ENCODE measurements at regions of chr11 and their contacts with region 1.

Region 1: DNA sequence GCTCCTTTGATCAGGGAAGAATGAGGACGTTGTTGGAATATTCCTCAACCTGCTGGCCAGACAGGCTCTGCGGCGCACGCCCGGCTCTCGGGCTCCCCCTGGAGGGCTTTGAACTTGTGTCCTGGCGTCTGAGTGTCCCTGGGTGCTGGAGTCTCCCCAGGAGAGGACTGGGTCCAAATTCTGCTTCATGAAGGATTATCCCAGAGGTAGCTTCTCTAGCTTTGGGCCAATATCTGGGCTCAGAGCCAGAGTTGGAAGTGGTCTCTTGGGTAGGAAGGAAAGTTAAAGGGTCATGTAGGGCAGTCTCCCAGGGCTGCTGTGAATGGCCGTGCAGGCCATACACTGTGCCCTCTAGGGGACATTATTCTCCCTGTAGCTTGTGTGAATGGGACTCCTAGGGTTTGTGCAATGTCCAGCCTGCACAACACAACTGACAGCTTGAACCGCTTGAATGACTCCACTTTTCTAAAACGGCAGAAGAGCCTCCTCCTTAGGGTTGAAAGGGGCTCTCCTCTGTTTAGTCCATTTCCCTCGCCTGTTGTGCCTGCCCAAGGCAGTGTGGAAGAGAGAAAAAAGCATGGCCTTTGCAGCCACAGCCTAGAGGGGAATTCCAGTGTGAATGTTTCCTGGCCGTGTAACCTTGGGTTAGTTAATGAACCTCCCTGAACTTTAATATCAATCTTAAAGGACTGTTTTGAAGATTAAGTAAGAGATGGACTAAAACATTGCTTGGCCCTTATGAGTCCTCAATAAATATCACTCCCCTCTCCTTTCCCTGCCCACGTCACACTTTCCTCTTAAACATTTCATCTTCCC is 111.2 kb upstream of the THY1 start:
- DNase-seq: no peak
- H3K4me3 ChIP-seq: no peak overlapping the region
- H3K27me3 ChIP-seq: peaks cover 9% of the 10 kb centered on the region
- CTCF ChIP-seq: peak; percentile 93

Region 2: DNA sequence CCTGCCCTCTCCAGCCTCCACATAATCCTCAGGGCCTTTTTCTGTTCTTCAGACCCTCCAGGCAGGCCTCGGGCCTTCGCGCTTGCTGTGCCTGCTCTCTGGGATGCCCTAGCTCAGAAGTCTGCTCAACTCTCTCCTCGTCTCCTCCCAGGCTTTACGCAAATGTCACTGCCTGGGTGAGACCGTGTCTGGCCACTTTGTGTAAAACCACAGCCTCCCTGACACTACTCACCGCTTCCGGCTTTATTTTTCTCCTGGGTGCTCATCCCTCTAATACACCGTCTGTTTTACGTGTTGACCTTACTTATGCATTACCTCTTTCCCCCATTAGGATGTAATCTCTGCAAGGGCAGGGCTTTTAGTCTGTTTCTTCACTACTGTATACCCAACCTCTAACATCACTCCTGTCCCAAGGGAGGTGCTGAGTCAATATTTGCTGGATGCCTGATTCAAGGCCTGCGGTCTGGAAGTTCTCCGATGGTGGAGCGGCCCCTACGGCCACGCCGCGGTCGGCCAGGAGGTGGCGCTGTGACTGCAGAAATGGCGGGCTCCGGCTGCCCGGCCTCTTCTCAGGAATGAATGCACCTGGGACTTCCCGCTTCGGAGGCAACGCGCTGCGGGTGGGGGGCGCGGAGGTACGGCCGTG is 53.0 kb before region 1 on chr11:
- CTCF ChIA-PET with region 1: interaction called, 45 read pairs
- POLR2A ChIA-PET with region 1: no interaction called
- DNase-seq: peak; percentile 44
- H3K4me3 ChIP-seq: no peak overlapping the region
- H3K27me3 ChIP-seq: peaks cover 7% of the 10 kb centered on the region
- CTCF ChIP-seq: peak; percentile 98

Region 3: DNA sequence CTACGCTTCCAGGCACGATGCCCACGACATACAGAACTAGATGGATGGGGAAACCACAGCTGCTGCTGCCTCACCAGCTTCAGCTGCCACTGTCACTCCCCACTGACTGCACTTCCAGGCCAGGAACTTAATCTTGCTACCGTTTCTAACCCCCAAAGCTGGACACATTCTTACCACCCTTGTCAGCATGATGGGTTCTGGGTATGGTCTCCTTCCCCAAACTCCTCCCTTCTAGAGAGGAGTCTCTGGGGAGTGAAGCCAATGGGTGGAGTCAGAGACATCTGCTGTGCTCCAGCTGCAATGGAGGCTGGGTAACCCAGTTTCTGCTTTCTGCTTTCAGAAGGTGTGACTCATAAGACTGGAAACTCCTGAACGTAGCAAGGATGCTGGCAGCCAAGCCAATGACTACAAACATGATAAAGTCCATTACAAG is 24.1 kb before region 1 on chr11:
- CTCF ChIA-PET with region 1: interaction called, 15 read pairs
- POLR2A ChIA-PET with region 1: no interaction called
- DNase-seq: peak; percentile 46
- H3K4me3 ChIP-seq: no peak overlapping the region
- H3K27me3 ChIP-seq: peaks cover 18% of the 10 kb centered on the region
- CTCF ChIP-seq: no peak

Region 4: GRCh38 chr11:119518746-119519730 is 15.1 kb before region 1 on chr11:
- CTCF ChIA-PET with region 1: interaction called, 65 read pairs
- POLR2A ChIA-PET with region 1: no interaction called
- DNase-seq: no peak
- H3K4me3 ChIP-seq: no peak overlapping the region
- H3K27me3 ChIP-seq: peaks cover 9% of the 10 kb centered on the region
- CTCF ChIP-seq: no peak

Region 5: GRCh38 chr11:119545978-119546885 is 12.1 kb after region 1 on chr11:
- CTCF ChIA-PET with region 1: interaction called, 20 read pairs
- POLR2A ChIA-PET with region 1: no interaction called
- DNase-seq: no peak
- H3K4me3 ChIP-seq: no peak overlapping the region
- H3K27me3 ChIP-seq: no peaks in the 10 kb centered on the region
- CTCF ChIP-seq: no peak

Region 6: GRCh38 chr11:119560291-119560690 is 26.2 kb after region 1 on chr11:
- CTCF ChIA-PET with region 1: interaction called, 12 read pairs
- POLR2A ChIA-PET with region 1: no interaction called
- DNase-seq: no peak
- H3K4me3 ChIP-seq: no peak overlapping the region
- H3K27me3 ChIP-seq: peaks cover 10% of the 10 kb centered on the region
- CTCF ChIP-seq: no peak

Region 7: GRCh38 chr11:119608781-119609180 is 74.7 kb after region 1 on chr11:
- CTCF ChIA-PET with region 1: no interaction called
- POLR2A ChIA-PET with region 1: no interaction called
- DNase-seq: no peak
- H3K4me3 ChIP-seq: no peak overlapping the region
- H3K27me3 ChIP-seq: peaks cover 18% of the 10 kb centered on the region
- CTCF ChIP-seq: no peak

Region 8: DNA sequence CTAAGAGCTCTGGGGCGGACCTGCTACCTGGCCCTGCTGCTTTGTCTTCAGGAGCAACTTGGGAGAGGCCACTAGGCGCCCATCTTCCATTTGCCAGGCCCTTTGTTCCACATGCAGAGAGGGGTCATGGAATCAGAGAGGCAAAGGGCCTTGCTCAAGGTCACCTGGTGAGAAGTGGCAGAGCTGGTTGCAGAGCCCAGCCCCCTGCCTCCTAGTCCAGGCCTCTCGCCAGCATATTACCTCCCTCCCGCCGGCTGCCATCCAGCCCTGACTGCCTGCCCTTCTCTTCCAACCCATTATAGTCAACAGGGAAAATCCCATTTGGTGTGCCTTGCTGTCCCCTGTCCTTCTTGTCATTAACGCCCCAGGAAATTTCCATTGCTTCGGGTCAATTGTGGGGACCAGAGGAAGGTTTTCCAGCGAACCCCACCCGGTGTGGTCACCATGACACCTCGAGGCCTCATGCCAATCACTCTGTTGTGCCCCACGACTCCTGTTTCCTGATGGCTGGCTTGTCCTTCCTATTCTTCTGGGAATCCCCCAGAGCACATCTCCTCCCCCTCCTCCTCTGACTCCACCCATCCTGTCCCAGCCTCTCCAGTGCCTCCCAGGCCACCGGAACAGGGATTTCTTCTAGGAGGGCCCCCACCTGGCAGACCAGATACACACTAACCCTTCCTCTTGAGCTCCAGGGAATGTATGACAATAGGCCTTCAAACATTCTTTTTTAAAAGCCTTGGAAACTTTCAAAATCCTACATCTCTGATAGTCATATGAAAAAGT is 117.9 kb after region 1 on chr11:
- CTCF ChIA-PET with region 1: no interaction called
- POLR2A ChIA-PET with region 1: no interaction called
- DNase-seq: no peak
- H3K4me3 ChIP-seq: no peak overlapping the region
- H3K27me3 ChIP-seq: peaks cover 3% of the 10 kb centered on the region; the same call in 1 of the 2 replicates
- CTCF ChIP-seq: no peak